Naive thymus-derived CD4-positive, alpha-beta T cell (primary cell): ENCODE measurements at regions of chr17 and their contacts with region 1.

Region 1: GRCh38 chr17:75589012-75589918 is 1.7 kb downstream of the MYO15B start:
- DNase-seq: peak; percentile 81 to 98 (median 93)
- ATAC-seq: peak; percentile 94
- H3K4me3 ChIP-seq: peak overlapping the region; percentile 53
- H3K4me3 Mint-ChIP-seq: peak overlapping the region; percentile 57 to 95 (median 82)
- H3K27ac ChIP-seq: peak overlapping the region; percentile 83
- H3K27ac Mint-ChIP-seq: peak overlapping the region in 6 of 9 donors; percentile 59 to 95 (median 86)
- H3K4me1 ChIP-seq: peaks cover 0 to 2% of the 10 kb centered on the region in 2 donors
- H3K4me1 Mint-ChIP-seq: peaks cover 0 to 17% (median 11%) of the 10 kb centered on the region in 7 donors
- H3K27me3 ChIP-seq: no peaks in the 10 kb centered on the region
- H3K27me3 Mint-ChIP-seq: peaks cover 0 to 31% (median 0%) of the 10 kb centered on the region in 5 donors

Region 2: DNA sequence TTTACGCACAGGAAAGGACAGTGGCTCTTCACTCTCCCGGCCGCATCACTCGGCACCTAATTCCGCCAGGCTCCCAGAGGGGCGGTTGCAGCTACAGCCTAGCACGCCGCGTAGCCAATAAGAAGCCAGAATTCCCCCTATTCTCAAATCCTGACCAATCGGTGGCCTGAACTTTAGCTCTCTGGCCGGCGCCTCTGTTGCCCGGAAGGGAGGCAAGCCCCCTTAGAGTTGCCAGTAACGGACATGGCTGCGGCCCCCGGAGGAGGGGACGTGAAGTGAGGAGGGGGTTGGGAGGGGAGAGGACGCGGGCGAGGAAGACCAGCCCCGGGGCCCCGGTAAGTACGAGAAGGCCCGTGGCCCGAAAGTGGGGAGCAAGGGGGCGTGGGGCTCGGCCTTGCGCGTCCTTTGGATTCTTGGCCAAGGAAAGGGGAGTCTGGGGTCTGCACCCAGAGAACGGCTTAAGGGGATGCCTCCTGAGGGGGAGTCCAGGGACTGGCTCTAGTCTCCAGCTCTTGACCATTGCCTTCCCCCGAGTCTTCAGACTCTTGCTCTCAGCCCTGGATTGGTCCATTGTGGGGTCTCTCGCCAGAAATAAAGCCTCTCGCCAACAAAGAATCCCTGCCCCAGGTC is 132.7 kb before region 1 on chr17 and contains the start of gene TMEM94:
- CTCF ChIA-PET with region 1: no interaction called
- POLR2A ChIA-PET with region 1: no interaction called
- intact Hi-C with region 1: loop called in 1 of 2 experiments (anchors 2 kb)
- DNase-seq: peak; percentile 70 to 93 (median 89)
- ATAC-seq: peak; percentile 98
- H3K4me3 ChIP-seq: peak within 1 kb of the TSS; percentile 99
- H3K4me3 Mint-ChIP-seq: peak within 1 kb of the TSS; percentile 92 to 99 (median 94)
- H3K27ac ChIP-seq: peak within 1 kb of the TSS; percentile 74
- H3K27ac Mint-ChIP-seq: peak within 1 kb of the TSS; percentile 84 to 99 (median 93)
- H3K4me1 ChIP-seq: peaks cover 10% of the 10 kb centered on the region in 2 donors
- H3K4me1 Mint-ChIP-seq: peaks cover 25 to 42% (median 34%) of the 10 kb centered on the region in 7 donors
- H3K27me3 ChIP-seq: no peaks in the 10 kb centered on the region
- H3K27me3 Mint-ChIP-seq: no peaks in the 10 kb centered on the region
- total RNA-seq, gene TMEM94: 74.1 to 97.2 (median 81.9) TPM

Region 3: GRCh38 chr17:75481194-75482068 is 107.8 kb before region 1 on chr17:
- CTCF ChIA-PET with region 1: no interaction called
- POLR2A ChIA-PET with region 1: no interaction called
- intact Hi-C with region 1: no loop called
- DNase-seq: no peak
- ATAC-seq: no peak
- H3K4me3 ChIP-seq: no peak overlapping the region
- H3K4me3 Mint-ChIP-seq: no peak overlapping the region
- H3K27ac ChIP-seq: no peak overlapping the region
- H3K27ac Mint-ChIP-seq: no peak overlapping the region
- H3K4me1 ChIP-seq: peaks cover 0 to 3% of the 10 kb centered on the region in 2 donors
- H3K4me1 Mint-ChIP-seq: peaks cover 7 to 21% (median 14%) of the 10 kb centered on the region in 7 donors
- H3K27me3 ChIP-seq: no peaks in the 10 kb centered on the region
- H3K27me3 Mint-ChIP-seq: no peaks in the 10 kb centered on the region

Region 4: DNA sequence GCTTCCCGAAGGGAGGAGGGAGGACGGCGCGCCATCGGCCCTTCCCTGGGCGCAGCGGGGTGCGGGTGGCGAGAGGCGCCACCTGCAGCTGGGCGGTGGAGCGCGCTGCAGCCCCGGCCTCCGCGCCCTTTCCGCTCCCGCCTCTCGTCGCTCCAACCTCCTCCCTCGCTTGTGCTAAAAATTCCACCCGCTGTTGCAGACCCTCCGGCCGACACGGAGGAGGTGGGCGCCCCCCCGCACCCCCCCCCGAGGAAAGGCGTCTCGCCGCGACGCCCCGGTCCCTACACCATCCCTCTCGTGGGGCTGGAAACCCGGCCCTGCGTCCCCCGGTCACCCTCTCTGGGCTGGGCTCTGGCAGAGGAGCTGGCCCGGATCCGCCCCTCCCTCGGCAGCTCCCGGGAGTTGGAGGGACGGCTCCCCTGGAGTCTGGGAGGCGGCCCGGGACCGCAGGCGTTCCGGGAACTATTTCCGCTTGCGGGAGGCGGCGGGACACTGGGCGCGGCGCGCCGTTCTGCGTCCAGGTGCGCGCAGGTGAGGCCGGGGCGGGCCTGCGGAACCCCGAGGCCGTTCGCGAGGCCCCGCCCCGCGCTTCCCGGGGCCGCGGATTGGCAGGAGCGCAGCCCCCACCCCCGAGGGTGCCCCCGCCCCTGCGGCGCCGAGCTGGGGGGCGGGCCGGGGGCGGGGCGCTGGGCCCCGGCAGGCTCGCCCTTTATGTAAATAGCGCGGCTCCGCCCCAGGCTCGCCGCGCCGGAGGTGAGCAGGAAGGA is 64.1 kb before region 1 on chr17 and contains the start of gene LLGL2:
- CTCF ChIA-PET with region 1: no interaction called
- POLR2A ChIA-PET with region 1: interaction called, 8 read pairs
- intact Hi-C with region 1: loop called (anchors 1 kb)
- DNase-seq: peak; percentile 82 to 91 (median 89)
- ATAC-seq: peak; percentile 98
- H3K4me3 ChIP-seq: peak within 1 kb of the TSS; percentile 75
- H3K4me3 Mint-ChIP-seq: peak within 1 kb of the TSS; percentile 76 to 86 (median 82)
- H3K27ac ChIP-seq: peak within 1 kb of the TSS; percentile 67
- H3K27ac Mint-ChIP-seq: peak within 1 kb of the TSS in 7 of 9 donors; percentile 45 to 74 (median 59)
- H3K4me1 ChIP-seq: peaks cover 6 to 7% of the 10 kb centered on the region in 2 donors
- H3K4me1 Mint-ChIP-seq: peaks cover 0 to 20% (median 16%) of the 10 kb centered on the region in 7 donors
- H3K27me3 ChIP-seq: no peaks in the 10 kb centered on the region
- H3K27me3 Mint-ChIP-seq: peaks cover 0 to 11% (median 0%) of the 10 kb centered on the region in 5 donors
- total RNA-seq, gene LLGL2: 22.4 to 55.7 (median 33.7) TPM

Region 5: GRCh38 chr17:75667021-75667790 is 77.9 kb after region 1 on chr17 and contains the starts of genes RECQL5 and SAP30BP:
- CTCF ChIA-PET with region 1: no interaction called
- POLR2A ChIA-PET with region 1: interaction called, 5 read pairs
- intact Hi-C with region 1: loop called in 1 of 2 experiments (anchors 1 kb)
- DNase-seq: peak; percentile 94 to 98 (median 96)
- ATAC-seq: peak; percentile 100
- H3K4me3 ChIP-seq: peak within 1 kb of the TSS; percentile 99
- H3K4me3 Mint-ChIP-seq: peak within 1 kb of the TSS in 6 of 10 donors; percentile 59 to 74 (median 64)
- H3K27ac ChIP-seq: peak within 1 kb of the TSS; percentile 96
- H3K27ac Mint-ChIP-seq: peak within 1 kb of the TSS in 5 of 9 donors; percentile 6 to 83 (median 60)
- H3K4me1 ChIP-seq: peaks cover 21 to 26% of the 10 kb centered on the region in 2 donors
- H3K4me1 Mint-ChIP-seq: peaks cover 11 to 34% (median 21%) of the 10 kb centered on the region in 7 donors
- H3K27me3 ChIP-seq: no peaks in the 10 kb centered on the region
- H3K27me3 Mint-ChIP-seq: no peaks in the 10 kb centered on the region
- total RNA-seq, gene RECQL5: 38.7 to 76.5 (median 49.2) TPM
- total RNA-seq, gene SAP30BP: 97.6 to 198 (median 116) TPM